Transverse colon (tissue), 4 donors: ENCODE measurements at regions of chr18 and their contacts with region 1.

Region 1: DNA sequence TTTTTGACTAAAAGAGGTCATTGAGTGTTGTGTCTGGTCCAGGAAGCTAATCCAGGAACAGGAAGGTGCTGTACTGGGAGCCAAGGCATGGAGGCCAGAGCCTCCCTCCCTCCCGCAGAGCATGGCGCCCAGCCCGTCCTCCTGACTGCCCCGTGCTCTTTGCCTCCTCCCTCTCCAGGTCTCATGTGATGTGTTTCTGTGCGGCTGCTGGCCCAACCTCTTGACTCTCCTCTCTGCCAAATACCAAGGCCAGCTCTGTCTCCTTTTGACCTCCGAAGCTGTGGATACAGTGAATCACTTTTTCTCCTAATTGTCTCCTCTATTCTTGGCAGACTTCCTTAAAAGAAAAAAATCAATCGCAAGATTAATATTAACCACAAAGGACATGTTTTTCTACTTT is 284.1 kb downstream of the PHLPP1 start:
- DNase-seq: peak; percentile 40
- H3K4me3 ChIP-seq: no peak overlapping the region
- H3K27ac ChIP-seq: no peak overlapping the region
- H3K4me1 ChIP-seq: no peaks in the 10 kb centered on the region
- H3K27me3 ChIP-seq: no peaks in the 10 kb centered on the region
- CTCF ChIP-seq: no peak
- EP300 ChIP-seq: no peak
- POLR2A ChIP-seq: no peak

Region 2: DNA sequence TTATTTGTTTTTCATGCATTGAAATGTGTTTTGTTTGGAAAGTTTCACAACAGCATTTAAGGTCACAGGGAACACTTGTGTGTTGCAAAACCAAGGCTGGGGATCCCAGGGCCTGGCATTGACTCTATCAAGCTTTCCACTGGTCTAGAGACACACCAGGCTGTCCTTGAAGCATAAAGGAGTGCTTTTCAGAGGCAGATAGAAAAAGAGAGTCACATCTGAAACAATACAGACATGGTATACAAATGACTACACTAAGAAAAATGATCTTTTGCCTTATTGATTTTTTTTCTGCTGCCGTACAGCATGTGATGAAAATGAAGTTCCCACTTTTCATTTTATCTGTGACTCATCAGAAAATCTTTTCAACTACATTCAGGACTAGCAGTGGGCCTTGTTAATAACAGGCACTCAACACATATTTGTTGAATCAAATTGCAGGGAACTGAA is 538.5 kb before region 1 on chr18:
- in situ Hi-C with region 1: no loop called
- intact Hi-C with region 1: loop called (anchors 2 kb)
- DNase-seq: no peak
- H3K4me3 ChIP-seq: no peak overlapping the region
- H3K27ac ChIP-seq: no peak overlapping the region
- H3K4me1 ChIP-seq: no peaks in the 10 kb centered on the region
- H3K27me3 ChIP-seq: no peaks in the 10 kb centered on the region
- CTCF ChIP-seq: no peak
- EP300 ChIP-seq: no peak
- POLR2A ChIP-seq: no peak

Region 3: DNA sequence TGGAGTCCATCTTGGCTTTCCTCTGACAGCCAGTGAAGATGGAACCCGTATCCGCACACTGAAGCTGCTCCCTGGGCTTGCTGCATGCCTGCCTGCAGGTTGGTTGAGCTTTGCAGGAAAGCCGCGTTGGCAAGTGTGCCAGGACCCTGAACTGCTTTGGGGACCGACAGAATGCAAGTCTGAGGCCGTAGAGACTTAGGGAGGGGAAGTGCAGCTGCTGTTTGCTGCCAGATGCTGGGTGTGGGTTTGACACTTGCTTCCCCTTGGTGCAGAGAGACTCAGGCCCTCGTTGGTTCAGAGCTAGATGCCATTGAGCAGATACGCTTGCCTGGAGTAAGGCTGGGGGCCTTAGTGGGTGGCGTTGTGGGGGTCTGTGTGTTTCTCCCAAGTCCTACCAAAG is 297.1 kb before region 1 on chr18:
- in situ Hi-C with region 1: loop called in 3 of 4 experiments (anchors 10 to 25 kb)
- intact Hi-C with region 1: no loop called
- DNase-seq: no peak
- H3K4me3 ChIP-seq: no peak overlapping the region
- H3K27ac ChIP-seq: no peak overlapping the region
- H3K4me1 ChIP-seq: no peaks in the 10 kb centered on the region
- H3K27me3 ChIP-seq: no peaks in the 10 kb centered on the region
- CTCF ChIP-seq: no peak
- EP300 ChIP-seq: no peak
- POLR2A ChIP-seq: no peak